ENCODE measurements at regions of chr15 and their contacts with region 1.

Region 1: DNA sequence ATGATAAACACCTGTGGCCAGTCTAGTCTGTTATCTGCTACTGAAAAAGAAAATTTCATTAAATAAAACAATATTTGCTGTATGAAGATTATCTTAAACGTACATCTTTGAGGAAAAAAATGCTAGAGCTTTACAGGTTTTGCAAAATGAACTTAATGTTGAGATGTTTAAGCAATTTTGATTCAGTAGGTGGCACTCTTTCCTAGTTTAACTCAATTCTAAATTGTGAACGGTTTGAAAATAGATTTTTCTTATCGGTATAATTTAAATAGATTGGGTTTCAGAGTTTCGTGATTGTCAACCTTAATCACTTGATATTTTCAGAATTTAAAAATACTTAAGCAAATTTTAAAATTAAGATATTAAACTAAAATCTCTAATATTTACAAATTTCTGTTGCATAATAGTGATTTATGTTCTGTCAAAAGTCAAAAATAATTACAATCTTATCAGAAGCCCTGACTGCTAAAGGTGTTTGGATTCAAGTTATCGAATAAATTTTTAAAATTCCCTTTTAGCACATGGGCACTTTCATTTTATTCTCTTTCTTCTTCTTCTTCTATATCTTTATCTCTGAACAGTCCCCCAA is 7.0 kb upstream of the RNF111 start:
- DNase-seq: peak; percentile 43 to 50
- ATAC-seq: peak in 1 of 2 experiments; percentile 55; a peak in 1 of 6 replicates
- H3K4me3 ChIP-seq: no peak overlapping the region
- H3K27ac ChIP-seq: no peak overlapping the region
- H3K4me1 ChIP-seq: no peaks in the 10 kb centered on the region
- CTCF ChIP-seq: peak; percentile 87
- EP300 ChIP-seq: no peak
- POLR2A ChIP-seq: no peak
- RAD21 ChIP-seq: peak; percentile 83 to 91

Region 2: GRCh38 chr15:58957101-58957973 is 23.1 kb before region 1 on chr15:
- CTCF ChIA-PET with region 1: interaction called, 19 read pairs
- POLR2A ChIA-PET with region 1: no interaction called
- DNase-seq: peak; percentile 85 to 88
- ATAC-seq: peak; percentile 97 to 99
- H3K4me3 ChIP-seq: no peak overlapping the region
- H3K27ac ChIP-seq: no peak overlapping the region
- H3K4me1 ChIP-seq: peaks cover 12% of the 10 kb centered on the region; the same call in 2 of the 3 replicates
- CTCF ChIP-seq: peak; percentile 93
- EP300 ChIP-seq: no peak
- POLR2A ChIP-seq: no peak
- RAD21 ChIP-seq: peak; percentile 79 to 82

Region 3: DNA sequence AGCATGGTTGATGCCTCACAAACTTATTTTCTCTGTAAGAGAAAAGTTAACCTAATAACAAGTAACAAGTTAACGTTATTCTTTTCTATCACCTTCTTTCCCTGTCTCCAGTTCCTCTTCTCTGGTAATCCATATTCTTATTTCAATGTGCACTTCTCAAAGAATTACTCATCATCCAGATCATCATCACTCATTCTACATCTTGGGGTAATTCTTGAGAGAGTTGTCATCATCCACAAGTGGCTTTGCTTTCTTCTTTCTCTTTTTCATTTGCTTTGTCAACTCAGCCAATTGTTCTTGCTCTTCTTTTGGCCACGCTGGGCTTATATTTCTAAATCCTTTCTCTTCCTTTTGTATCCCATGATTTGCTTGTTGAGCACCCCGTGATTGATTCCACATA is 13.7 kb before region 1 on chr15:
- CTCF ChIA-PET with region 1: interaction called, 12 read pairs
- POLR2A ChIA-PET with region 1: no interaction called
- DNase-seq: no peak
- ATAC-seq: 0 out of 6 replicates have a peak, but pooled peaks of 1 of the 2 experiments have one; percentile 47
- H3K4me3 ChIP-seq: no peak overlapping the region
- H3K27ac ChIP-seq: no peak overlapping the region
- H3K4me1 ChIP-seq: peaks cover 12% of the 10 kb centered on the region
- CTCF ChIP-seq: no peak
- EP300 ChIP-seq: no peak
- POLR2A ChIP-seq: no peak
- RAD21 ChIP-seq: no peak

Region 4: DNA sequence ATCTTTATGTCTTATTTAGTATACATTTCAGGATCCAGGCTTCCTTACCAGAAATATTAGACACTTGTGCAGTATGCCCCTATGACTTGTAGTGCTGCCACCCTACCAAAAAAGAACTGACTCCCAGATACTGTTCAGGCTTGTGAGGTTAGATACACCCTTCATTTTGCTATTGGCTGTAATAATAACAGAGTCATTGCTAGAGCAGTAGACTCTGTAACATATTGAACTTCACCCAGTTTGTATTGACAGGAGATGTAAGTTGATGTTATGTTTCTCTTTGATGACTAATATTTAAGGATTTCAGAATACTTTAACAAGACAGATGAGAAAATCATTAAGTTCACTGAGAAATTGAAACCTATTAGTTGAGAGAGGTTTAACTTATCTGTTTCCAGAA is 39.9 kb after region 1 on chr15:
- CTCF ChIA-PET with region 1: no interaction called
- POLR2A ChIA-PET with region 1: no interaction called
- DNase-seq: no peak
- ATAC-seq: no peak
- H3K4me3 ChIP-seq: no peak overlapping the region
- H3K27ac ChIP-seq: no peak overlapping the region
- H3K4me1 ChIP-seq: peaks cover 5% of the 10 kb centered on the region; the same call in 1 of the 3 replicates
- CTCF ChIP-seq: no peak
- EP300 ChIP-seq: no peak
- POLR2A ChIP-seq: no peak
- RAD21 ChIP-seq: no peak

Region 5: DNA sequence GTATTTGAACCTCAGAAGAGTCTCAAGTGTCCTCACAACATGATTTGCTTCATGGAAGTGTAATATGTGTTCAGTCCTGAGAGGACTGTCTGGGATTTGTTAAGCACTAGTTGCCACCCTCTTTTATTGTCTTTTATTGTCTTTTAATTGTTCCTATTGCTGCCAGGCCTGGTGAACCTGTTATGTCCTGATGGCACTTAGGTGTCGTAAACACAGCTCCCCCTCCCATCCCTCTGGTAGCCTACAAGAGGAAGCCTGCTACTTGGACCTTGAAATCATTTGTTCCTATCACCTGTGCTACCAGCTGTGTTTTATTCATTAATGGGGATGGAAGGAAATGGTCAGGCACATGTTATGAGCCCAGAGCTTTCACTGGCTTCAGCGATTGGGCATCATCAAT is 143.8 kb after region 1 on chr15:
- CTCF ChIA-PET with region 1: no interaction called
- POLR2A ChIA-PET with region 1: no interaction called
- DNase-seq: no peak
- ATAC-seq: peak in 1 of 2 experiments; percentile 45; a peak in 3 of 6 replicates
- H3K4me3 ChIP-seq: no peak overlapping the region
- H3K27ac ChIP-seq: no peak overlapping the region
- H3K4me1 ChIP-seq: no peaks in the 10 kb centered on the region
- CTCF ChIP-seq: no peak
- EP300 ChIP-seq: no peak
- POLR2A ChIP-seq: no peak
- RAD21 ChIP-seq: no peak